Breast epithelium (tissue), 4 donors: ENCODE measurements at regions of chr20 and their contacts with region 1.

Region 1: DNA sequence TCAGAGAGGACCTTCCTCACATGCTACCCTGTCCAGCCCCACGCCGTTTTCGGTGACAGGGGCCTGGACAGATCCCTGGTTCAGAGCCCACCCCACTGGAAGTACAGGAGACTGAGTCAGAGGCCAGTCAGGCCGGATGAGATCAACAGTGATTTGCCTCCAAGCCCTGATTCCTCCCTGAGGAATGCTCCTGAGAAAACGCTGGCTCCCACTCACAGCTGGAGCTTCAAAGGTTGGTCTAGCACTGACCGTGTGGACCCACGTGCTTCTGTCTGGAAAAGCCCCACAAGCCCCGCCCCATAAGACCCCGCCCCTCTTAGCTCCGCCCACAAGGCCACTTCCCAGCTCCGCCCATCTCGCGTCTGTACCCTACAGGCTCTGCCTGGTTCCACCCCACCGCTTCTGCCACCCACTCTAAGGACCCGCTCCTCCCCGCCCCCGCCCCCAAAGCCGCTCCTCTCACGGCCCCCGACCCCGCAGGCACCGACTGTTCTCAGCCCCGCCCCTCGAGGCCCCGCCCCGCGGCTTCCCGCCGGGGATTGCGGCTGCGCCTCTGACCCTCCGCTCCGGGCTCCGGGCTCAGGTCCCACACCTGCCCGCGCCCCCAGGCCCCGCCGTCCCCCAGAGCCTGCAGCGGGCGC is 64.9 kb upstream of the BHLHE23 start:
- DNase-seq: no peak
- H3K4me3 ChIP-seq: no peak overlapping the region
- H3K27ac ChIP-seq: no peak overlapping the region
- H3K4me1 ChIP-seq: no peaks in the 10 kb centered on the region
- H3K27me3 ChIP-seq: peaks cover 5 to 84% of the 10 kb centered on the region in 2 donors
- CTCF ChIP-seq: no peak
- POLR2A ChIP-seq: no peak

Region 2: DNA sequence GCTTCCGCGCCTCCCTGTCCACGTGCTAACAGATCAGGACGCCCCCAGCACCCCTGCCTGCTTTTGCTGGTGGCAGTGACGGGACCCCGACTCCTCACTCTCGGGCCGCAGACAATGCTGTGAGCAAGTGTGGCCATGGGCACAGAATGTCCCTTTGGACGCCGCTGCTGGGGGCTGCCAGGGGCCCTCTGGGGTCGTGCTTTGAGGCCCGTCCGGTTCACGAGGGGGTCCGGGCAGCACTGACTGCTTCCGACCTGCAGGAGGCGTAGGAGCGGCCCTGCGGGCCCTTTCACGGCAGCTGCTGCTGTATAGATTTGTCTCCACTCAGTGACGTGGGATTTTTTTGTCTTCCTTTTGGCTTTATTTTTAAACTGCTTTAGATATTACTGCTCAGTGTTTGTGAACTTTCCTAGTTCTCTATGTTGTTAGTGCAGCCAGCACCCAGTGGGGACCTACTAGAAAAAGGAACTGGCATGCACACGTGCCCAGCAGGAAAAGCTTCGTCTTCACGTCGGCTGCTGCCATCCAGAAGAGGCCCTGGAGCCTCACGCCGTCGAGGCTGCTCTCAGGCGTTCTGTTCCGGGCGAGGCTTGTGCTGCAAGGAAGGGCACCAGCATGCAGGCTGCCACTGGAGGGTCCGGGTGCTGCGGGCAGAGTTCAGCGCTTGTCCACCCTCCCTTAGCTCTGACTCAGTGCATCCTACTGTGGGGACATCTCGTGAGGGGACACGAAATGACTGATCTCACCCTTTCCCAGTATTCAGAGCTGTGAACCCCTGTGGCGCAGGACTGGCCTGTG is 862.8 kb after region 1 on chr20:
- intact Hi-C with region 1: loop called (anchors 5 kb)
- DNase-seq: no peak
- H3K4me3 ChIP-seq: no peak overlapping the region
- H3K27ac ChIP-seq: no peak overlapping the region
- H3K4me1 ChIP-seq: no peaks in the 10 kb centered on the region
- H3K27me3 ChIP-seq: no peaks in the 10 kb centered on the region
- CTCF ChIP-seq: no peak
- POLR2A ChIP-seq: no peak